Right cardiac atrium (tissue), 5 donors: ENCODE measurements at regions of chr17 and their contacts with region 1.

Region 1: DNA sequence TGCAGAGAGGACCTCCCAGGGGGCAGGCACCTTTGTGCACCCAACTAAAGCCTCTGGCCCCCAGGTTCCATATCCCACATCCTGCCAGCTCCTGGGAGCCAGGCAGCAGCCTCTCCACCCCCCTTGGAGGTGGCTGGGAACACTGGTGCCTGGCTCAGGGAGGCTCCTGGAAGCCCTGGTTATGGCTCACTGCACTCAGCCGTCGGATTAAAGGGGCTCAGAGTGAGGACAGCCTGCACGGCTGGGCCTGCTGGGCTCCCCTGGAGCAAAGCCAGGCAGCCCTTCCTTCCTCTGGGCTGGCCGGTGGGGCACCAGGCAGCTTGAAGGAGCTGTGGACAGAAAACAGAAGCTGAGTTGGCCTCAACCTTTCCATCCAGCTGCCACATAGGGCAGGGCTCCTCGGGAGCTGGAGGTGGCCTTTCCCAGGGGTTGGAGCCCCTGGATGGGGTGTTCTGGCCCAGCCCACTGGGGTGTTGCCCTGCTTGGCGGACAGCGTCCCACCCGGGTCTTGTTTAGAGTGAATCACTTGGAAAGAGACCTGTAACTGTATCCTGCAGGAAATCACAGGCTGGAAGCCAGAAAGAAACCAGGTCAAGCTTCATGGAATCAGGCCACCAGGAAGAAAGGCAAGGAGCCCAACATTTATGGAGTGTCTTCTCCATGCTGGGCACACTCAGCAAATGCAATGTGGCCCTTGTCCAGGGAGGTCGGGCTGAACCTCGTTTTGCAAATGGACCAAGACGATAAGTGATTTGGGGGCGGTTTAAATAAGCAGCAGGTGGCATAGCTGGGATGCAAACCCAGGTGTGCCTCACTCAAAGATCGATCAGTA is 253.3 kb downstream of the SOX9 start:
- DNase-seq: peak in 2 of 3 donors; percentile 30 to 66
- ATAC-seq: peak; percentile 36 to 64
- H3K4me3 ChIP-seq: no peak overlapping the region
- H3K27ac ChIP-seq: no peak overlapping the region
- H3K4me1 ChIP-seq: peaks cover 2% of the 10 kb centered on the region
- H3K27me3 ChIP-seq: no peaks in the 10 kb centered on the region

Region 2: DNA sequence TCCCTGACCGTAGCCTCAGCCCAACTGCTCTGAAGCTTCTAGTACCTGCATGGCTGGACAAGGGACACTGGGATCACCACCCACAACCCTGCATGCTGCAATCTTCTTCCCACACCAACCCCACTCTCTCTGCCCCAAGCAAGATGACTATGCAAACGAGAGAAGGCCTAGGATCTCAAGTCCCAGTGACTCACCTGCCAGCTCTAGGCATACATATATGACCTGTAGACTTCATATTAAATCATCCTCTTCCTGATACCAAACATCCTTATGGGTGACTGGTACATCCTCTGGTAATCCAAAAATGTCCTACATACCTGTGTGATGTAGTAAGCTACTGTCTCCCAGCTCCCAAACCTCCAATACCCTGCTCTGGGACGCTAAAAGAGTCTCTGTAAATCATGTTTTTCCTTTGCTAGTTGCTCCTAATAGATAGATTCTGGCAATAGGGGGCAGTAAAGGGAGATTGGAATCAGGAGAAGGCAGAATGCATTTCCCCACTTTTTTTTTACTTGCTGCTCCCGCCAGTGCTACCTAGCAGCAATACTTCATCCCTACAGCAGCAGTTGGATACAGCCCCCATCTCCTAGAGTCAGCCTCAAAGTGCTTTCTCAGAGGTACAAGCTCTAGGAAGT is 296.7 kb before region 1 on chr17:
- intact Hi-C with region 1: no loop called
- DNase-seq: no peak
- ATAC-seq: no peak
- H3K4me3 ChIP-seq: no peak overlapping the region
- H3K27ac ChIP-seq: no peak overlapping the region
- H3K4me1 ChIP-seq: no peaks in the 10 kb centered on the region
- H3K27me3 ChIP-seq: no peaks in the 10 kb centered on the region

Region 3: DNA sequence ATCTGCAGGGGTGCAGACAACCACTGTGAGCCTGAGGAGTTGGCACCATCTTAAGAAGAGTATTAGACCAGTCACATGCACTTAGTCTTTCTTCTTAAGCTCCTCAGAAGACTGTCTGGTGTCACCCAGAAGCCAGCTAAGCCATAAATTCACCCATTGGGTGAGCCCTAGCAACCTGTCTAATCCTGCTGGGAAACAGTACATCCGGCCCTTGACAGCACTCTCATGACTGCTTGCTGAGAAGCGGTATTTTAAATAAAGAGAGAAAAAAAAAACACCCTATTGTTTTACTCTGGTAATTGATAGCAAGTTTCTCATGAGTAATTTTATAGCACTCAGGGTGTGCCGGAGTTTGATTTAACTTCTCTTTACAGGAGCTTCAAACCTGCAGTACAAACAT is 118.6 kb before region 1 on chr17:
- intact Hi-C with region 1: no loop called
- DNase-seq: no peak
- ATAC-seq: no peak
- H3K4me3 ChIP-seq: no peak overlapping the region
- H3K27ac ChIP-seq: no peak overlapping the region
- H3K4me1 ChIP-seq: no peaks in the 10 kb centered on the region
- H3K27me3 ChIP-seq: no peaks in the 10 kb centered on the region

Region 4: DNA sequence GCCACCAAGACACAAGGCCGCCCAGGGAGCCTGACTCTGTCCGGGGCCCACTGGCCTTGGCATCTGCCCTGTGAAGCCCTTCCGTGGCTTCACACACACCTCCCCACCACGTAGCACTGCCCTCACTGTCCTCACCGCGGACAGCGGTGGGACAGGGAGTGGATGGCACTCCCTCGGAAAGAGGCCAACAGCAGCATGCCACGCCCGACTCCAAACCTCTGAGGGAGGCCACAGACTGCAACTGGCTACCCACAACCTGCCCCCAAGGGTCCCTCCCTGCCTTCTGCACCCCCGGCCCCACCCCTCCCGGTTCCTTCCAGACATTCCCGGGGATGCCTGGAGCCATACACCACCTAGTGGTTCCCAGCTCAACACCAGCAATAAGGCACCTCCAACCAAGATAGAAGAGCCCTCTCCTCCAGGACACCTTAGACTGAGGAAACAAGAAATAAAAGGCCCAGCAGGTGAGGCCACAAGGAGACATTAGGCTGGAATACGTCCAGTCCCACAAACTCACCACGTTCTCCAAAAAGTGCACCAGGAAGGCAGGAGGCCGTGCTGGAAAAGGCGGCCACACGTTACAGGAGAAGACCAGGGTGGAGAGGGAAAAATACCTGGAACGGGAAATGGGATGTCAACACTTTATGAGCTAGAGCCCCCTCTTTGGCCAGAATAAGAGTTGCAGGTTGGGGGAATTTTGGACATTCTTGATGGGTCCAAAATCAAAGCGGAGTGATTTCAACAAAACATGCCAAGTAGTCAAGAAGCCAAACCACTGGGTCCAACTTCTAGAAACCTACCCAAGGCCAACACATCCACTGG is 56.7 kb after region 1 on chr17:
- intact Hi-C with region 1: loop called in 1 of 4 experiments (anchors 10 kb)
- DNase-seq: no peak
- ATAC-seq: peak; percentile 30 to 34
- H3K4me3 ChIP-seq: no peak overlapping the region
- H3K27ac ChIP-seq: no peak overlapping the region
- H3K4me1 ChIP-seq: no peaks in the 10 kb centered on the region
- H3K27me3 ChIP-seq: no peaks in the 10 kb centered on the region